CD8-positive, alpha-beta T cell (primary cell): ENCODE measurements at regions of chrX and their contacts with region 1.

Region 1: DNA sequence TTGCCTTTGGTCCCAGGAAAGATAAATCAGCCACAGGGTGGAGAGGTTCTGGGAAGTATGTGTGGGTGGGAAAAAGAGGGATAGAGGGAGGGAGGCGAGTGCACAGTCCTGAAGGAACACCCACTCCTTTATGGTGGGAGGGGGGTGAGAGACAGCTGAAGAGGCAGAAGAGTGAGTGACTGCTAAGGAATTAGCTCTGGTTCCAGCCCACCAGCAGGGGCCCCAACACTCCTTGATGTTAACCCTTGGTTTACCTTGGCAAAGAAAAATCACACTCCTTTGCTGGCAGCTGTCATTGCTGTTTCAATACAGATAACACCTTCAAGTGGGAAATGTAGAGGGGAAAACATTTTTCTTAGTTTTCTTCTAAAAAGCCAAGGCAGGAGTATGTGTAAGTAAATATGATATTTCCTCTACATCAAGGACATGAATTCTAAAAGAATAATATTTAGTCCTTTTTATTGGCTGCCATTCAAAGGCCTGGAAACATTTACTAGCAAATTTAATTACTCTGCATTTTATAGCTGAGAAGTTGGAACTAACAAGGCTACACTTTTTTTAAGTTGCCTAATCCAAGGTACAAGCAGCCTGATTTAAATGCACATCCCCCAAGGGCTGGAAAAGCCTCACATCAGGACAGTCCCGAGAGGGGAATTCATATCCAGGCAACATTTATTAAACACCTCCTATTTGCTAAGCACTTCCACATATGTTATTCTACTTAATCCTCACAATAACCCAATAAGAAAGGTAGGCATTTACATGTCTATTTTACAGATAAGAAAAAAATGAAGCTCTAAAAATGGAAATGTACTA is 81.7 kb downstream of the HS6ST2 start:
- DNase-seq: no peak
- ATAC-seq: no peak
- H3K4me3 ChIP-seq: no peak overlapping the region
- H3K4me3 Mint-ChIP-seq: no peak overlapping the region
- H3K27ac ChIP-seq: no peak overlapping the region
- H3K27ac Mint-ChIP-seq: no peak overlapping the region
- H3K4me1 ChIP-seq: no peaks in the 10 kb centered on the region
- H3K4me1 Mint-ChIP-seq: no peaks in the 10 kb centered on the region
- H3K27me3 ChIP-seq: no peaks in the 10 kb centered on the region
- H3K27me3 Mint-ChIP-seq: no peaks in the 10 kb centered on the region
- CTCF ChIP-seq: no peak

Region 2: DNA sequence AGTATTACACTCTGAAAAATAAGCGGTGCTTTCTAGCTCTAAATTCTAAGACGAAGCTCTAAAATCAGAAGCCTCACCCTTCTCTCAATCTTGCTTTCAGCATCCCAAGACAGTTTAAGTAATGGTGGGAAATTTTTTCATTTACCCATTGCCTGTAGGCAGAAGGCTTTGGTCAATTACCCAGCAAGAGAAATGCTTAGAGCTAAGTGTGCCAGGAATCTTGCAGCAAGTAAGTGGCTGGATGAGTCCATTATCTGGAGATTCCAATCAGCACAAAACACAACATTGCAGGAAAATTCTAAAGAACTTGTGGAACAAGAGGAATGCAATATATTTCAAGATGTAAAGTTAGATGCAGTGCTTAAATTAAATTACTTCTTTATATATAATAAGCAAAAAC is 191.7 kb after region 1 on chrX:
- CTCF ChIA-PET with region 1: no interaction called
- POLR2A ChIA-PET with region 1: no interaction called
- intact Hi-C with region 1: loop called in 1 of 2 experiments (anchors 5 kb)
- DNase-seq: no peak
- ATAC-seq: no peak
- H3K4me3 ChIP-seq: no peak overlapping the region
- H3K4me3 Mint-ChIP-seq: no peak overlapping the region
- H3K27ac ChIP-seq: no peak overlapping the region
- H3K27ac Mint-ChIP-seq: no peak overlapping the region
- H3K4me1 ChIP-seq: no peaks in the 10 kb centered on the region
- H3K4me1 Mint-ChIP-seq: no peaks in the 10 kb centered on the region
- H3K27me3 ChIP-seq: no peaks in the 10 kb centered on the region
- H3K27me3 Mint-ChIP-seq: peaks cover 2% of the 10 kb centered on the region
- CTCF ChIP-seq: no peak